GM13976 (cell line): ENCODE measurements at regions of chr22 and their contacts with region 1.

Region 1: GRCh38 chr22:21582801-21583740 is 15.6 kb downstream of the UBE2L3 start:
- DNase-seq: no peak
- CTCF ChIP-seq: no peak

Region 2: DNA sequence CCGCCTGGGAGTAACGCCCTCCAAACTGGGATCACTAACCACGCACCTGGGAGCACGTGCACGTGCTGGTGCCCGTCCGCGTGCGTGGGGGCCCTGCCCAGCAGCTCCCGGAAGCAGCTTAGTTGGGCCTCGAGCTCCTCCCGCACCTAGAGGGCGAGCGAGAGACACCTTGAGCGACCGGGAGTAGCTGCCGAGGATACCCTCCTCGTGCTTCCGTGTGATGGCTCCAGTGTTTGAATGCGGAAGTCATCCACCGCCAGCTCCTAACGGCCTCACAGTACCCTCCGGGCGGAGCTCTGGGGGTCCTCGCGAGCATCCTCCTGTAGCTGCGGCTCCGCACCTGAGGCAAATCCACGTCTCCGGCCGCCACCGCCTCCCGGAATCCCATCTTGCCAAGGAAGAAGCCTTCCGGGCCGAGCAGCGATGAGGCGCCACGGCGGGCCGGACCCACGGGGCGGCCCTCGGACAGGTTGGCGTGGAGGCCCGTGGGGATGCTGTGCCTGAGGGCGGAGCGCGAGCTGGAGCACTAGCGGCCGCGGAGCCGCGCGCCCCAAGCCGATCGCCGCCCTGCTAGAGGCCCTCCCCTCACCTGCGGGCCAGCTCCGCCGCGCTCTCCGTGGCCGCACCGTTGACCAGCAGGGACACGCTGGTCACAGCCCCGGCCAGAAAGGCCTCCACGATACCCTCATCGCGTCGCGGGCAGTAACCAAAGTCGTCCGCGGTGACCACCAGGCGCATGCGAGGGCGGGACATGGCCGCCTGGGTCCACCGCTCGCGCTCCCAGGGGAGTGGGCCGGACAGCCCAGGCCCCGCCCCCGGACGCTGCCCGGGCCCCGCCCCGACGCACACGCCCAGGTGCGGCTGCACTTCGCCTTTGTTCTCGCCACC is 46.4 kb after region 1 on chr22 and contains the start of gene YDJC:
- in situ Hi-C with region 1: loop called (anchors 5 kb)
- DNase-seq: peak; percentile 96
- CTCF ChIP-seq: peak; percentile 81

Region 3: GRCh38 chr22:21677606-21678443 is 94.8 kb after region 1 on chr22:
- in situ Hi-C with region 1: no loop called
- DNase-seq: no peak
- CTCF ChIP-seq: no peak

Region 4: DNA sequence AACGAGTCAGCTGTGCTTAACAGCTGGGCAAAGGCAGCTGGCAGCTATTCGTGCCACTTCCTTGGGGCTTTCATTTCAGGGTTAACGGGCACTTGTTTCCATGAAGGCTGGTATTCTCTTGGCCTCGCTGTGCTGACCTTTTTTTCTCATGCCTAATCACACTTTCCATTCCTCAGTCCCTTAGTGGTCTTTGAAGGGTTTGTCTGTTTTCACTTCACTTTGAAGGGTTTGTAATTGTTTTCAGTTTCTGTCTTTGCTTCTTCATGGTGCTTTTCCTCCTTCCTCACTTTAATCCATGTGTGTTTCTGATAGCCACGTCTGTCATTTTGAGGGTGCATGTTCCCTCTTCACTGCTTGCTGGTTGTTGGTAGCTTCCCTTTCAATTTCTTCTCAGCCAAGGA is 107.3 kb after region 1 on chr22:
- in situ Hi-C with region 1: no loop called
- DNase-seq: peak; percentile 80
- CTCF ChIP-seq: no peak

Region 5: DNA sequence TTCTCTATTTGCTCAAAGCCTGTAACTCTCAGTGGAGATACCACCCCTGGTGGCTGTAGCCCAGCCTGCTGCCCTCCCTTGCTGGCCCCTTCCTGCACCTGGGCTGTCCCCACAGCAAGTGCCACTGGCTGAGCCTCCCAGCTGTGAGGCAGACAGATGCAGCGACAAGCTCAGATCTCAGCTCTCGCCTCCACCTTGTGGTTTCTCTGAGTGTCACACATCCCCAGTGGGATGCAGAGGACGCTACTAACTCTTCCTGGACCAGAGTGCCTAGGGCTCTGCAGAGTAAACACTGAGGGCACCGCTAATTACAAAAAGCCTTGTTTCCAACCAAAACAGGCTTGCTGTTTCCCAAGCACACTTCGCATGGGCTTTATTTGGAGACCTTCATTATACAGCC is 143.6 kb after region 1 on chr22:
- in situ Hi-C with region 1: no loop called
- DNase-seq: peak; percentile 76
- CTCF ChIP-seq: peak; percentile 22